ENCODE measurements at regions of chr2 and their contacts with region 1.

Region 1: GRCh38 chr2:221527776-221528309 is 44.3 kb downstream of the EPHA4 start:
- DNase-seq: peak; percentile 86 to 93
- H3K4me3 ChIP-seq: no peak overlapping the region
- H3K4me3 Mint-ChIP-seq: peak overlapping the region; percentile 43
- H3K27ac Mint-ChIP-seq: peak overlapping the region; percentile 39
- H3K4me1 ChIP-seq: peaks cover 55% of the 10 kb centered on the region
- H3K4me1 Mint-ChIP-seq: peaks cover 48% of the 10 kb centered on the region
- H3K27me3 ChIP-seq: no peaks in the 10 kb centered on the region
- H3K27me3 Mint-ChIP-seq: no peaks in the 10 kb centered on the region
- CTCF ChIP-seq: no peak

Region 2: DNA sequence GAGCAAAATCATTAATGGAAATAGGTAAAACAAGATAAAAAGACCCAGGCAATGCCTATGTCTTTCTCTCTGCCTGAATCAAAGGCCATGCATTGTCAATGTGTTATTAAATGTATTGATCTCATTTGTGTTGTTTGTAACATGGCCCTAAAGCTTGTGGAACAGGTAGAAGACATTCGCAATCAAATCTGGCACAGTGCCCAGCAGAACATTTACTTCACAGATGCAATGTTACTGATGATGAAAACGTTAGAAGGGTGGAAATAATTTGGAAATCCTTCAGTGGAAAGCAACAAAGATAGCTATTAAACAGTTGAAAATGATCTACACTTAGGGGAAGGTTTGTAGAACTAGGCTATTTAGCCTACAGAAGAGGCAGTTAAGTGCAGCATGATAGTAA is 324.0 kb before region 1 on chr2:
- CTCF ChIA-PET with region 1: no interaction called
- POLR2A ChIA-PET with region 1: no interaction called
- intact Hi-C with region 1: loop called (anchors 1 kb)
- DNase-seq: no peak
- H3K4me3 ChIP-seq: no peak overlapping the region
- H3K4me3 Mint-ChIP-seq: no peak overlapping the region
- H3K27ac Mint-ChIP-seq: no peak overlapping the region
- H3K4me1 ChIP-seq: peaks cover 26% of the 10 kb centered on the region
- H3K4me1 Mint-ChIP-seq: peaks cover 9% of the 10 kb centered on the region
- H3K27me3 ChIP-seq: no peaks in the 10 kb centered on the region
- H3K27me3 Mint-ChIP-seq: no peaks in the 10 kb centered on the region
- CTCF ChIP-seq: no peak

Region 3: DNA sequence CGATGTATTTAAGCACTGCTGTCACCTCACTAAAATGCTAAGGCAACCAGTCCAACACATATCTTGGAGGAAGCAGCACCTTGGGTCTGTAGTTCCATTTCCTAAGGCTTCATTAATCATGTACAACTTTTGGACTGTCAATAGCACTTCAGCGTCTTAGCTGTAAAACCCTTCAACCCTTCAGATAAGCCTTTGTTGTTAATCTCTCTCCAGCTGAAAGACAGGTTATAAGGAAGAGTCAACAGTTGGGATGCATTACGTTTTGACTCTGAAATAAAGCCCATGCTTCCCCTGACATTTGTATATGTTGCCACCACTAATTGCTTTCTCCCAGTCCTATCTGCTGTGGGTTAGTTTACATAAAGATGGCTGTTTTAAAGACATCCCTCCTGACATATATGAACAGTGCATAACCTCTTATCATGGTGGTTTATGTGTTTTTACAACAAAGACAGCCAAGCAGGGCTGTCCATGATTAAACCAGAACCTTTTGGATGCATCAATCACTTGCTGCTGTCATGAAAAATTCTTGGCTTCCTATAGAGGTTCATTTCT is 37.3 kb before region 1 on chr2:
- CTCF ChIA-PET with region 1: no interaction called
- POLR2A ChIA-PET with region 1: no interaction called
- intact Hi-C with region 1: loop called (anchors 1 kb)
- DNase-seq: peak in 1 of 2 experiments; percentile 49
- H3K4me3 ChIP-seq: no peak overlapping the region
- H3K4me3 Mint-ChIP-seq: no peak overlapping the region
- H3K27ac Mint-ChIP-seq: no peak overlapping the region
- H3K4me1 ChIP-seq: peaks cover 31% of the 10 kb centered on the region
- H3K4me1 Mint-ChIP-seq: peaks cover 40% of the 10 kb centered on the region
- H3K27me3 ChIP-seq: no peaks in the 10 kb centered on the region
- H3K27me3 Mint-ChIP-seq: no peaks in the 10 kb centered on the region
- CTCF ChIP-seq: no peak

Region 4: GRCh38 chr2:221517696-221518151 is 10.1 kb before region 1 on chr2:
- CTCF ChIA-PET with region 1: interaction called, 3 read pairs
- POLR2A ChIA-PET with region 1: no interaction called
- intact Hi-C with region 1: loop called (anchors 1 kb)
- DNase-seq: no peak
- H3K4me3 ChIP-seq: no peak overlapping the region
- H3K4me3 Mint-ChIP-seq: no peak overlapping the region
- H3K27ac Mint-ChIP-seq: no peak overlapping the region
- H3K4me1 ChIP-seq: peaks cover 43% of the 10 kb centered on the region
- H3K4me1 Mint-ChIP-seq: peaks cover 8% of the 10 kb centered on the region
- H3K27me3 ChIP-seq: no peaks in the 10 kb centered on the region
- H3K27me3 Mint-ChIP-seq: no peaks in the 10 kb centered on the region
- CTCF ChIP-seq: no peak

Region 5: GRCh38 chr2:221588306-221588985 is 60.6 kb after region 1 on chr2:
- CTCF ChIA-PET with region 1: interaction called, 4 read pairs
- POLR2A ChIA-PET with region 1: no interaction called
- intact Hi-C with region 1: loop called (anchors 1 kb)
- DNase-seq: no peak
- H3K4me3 ChIP-seq: no peak overlapping the region
- H3K4me3 Mint-ChIP-seq: peak overlapping the region; percentile 13
- H3K27ac Mint-ChIP-seq: peak overlapping the region; percentile 80
- H3K4me1 ChIP-seq: peaks cover 50% of the 10 kb centered on the region
- H3K4me1 Mint-ChIP-seq: peaks cover 38% of the 10 kb centered on the region
- H3K27me3 ChIP-seq: no peaks in the 10 kb centered on the region
- H3K27me3 Mint-ChIP-seq: no peaks in the 10 kb centered on the region
- CTCF ChIP-seq: no peak

Measured in Caco-2 (cell line).